Caco-2 (cell line): ENCODE measurements at regions of chr1 and their contacts with region 1.

Region 1: DNA sequence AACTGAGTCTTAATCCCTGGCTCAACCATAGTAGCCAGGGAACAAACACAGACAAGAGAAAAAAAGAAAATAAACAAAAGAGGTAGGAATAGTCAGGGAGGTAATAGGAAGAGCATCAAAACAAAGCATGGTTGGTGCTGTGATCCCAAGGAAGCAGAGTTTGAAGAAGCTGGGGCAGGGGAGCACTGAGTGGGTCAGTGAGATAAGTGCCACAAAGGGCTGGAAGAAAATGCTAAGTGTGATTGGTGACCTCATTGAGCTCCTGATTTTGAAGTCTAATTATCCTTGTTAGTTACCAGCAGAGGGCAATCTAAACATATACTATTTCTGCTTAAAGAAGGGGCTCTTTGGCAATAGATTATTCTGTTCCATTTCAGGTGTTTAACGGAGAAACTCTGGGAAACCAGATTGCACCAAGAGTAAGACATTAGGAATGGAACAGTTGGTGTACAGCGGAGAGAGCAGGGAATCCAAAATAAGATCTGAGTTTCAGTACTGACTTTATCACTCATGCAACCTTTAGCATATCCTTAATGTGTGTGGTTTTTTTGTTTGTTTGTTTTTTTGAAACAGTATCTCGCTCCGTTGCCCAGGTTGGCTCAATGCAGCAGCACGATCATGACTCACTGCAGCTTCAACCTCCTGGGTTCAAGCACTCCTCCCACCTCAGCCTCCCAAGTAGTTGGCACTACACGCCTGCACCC is 30.7 kb upstream of the KIAA1614 start:
- DNase-seq: no peak
- H3K4me3 ChIP-seq: no peak overlapping the region
- H3K4me3 Mint-ChIP-seq: no peak overlapping the region
- H3K27ac Mint-ChIP-seq: no peak overlapping the region
- H3K4me1 ChIP-seq: peaks cover 8% of the 10 kb centered on the region; the same call in 1 of the 2 replicates
- H3K4me1 Mint-ChIP-seq: peaks cover 14% of the 10 kb centered on the region
- H3K27me3 ChIP-seq: no peaks in the 10 kb centered on the region
- H3K27me3 Mint-ChIP-seq: no peaks in the 10 kb centered on the region
- CTCF ChIP-seq: peak; percentile 38 to 47

Region 2: DNA sequence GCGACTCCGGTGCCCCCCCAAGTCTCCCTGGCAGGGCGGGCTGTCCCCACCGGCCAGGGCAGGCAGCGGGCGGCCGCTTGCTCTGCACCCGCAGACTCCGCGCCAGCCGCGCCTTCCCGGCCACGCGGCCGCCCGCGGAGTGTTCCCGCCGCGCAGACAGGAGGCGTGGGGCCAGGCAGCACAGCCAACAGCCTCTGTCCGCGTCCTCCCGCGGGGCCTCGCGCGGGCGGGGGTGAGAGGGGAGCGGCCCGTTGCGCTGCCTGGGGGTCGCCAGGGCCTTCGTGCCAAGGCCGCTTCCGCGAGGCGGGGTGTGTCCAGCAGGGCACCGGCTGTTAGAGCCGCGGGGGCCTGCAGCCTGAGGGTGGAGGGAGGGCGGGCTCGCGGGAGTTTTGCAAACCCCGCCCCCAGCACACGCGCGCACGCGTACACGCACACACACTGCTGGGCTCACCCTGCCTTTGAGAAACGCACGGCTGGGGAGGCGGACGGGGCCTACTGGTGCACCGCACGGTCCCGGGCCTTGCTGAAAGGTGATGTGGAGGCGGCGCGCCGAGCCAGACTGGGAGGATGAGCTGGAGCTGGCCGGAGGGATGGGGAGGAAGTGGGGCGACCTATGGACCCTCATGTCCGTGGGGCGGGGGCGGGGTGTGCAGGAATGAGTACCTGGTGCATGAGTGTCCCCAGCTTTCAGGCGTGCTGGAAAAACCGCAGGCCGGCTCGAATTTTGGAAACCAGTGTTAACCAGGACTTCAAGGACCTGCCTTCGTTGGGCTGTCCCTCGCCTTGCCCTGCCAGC is 72.2 kb after region 1 on chr1:
- CTCF ChIA-PET with region 1: interaction called, 5 read pairs
- POLR2A ChIA-PET with region 1: no interaction called
- intact Hi-C with region 1: loop called (anchors 10 kb)
- DNase-seq: peak; percentile 70 to 71
- H3K4me3 ChIP-seq: peak overlapping the region; percentile 78
- H3K4me3 Mint-ChIP-seq: peak overlapping the region; percentile 73
- H3K27ac Mint-ChIP-seq: no peak overlapping the region
- H3K4me1 ChIP-seq: peaks cover 10% of the 10 kb centered on the region
- H3K4me1 Mint-ChIP-seq: no peaks in the 10 kb centered on the region
- H3K27me3 ChIP-seq: no peaks in the 10 kb centered on the region
- H3K27me3 Mint-ChIP-seq: no peaks in the 10 kb centered on the region
- CTCF ChIP-seq: no peak

Region 3: GRCh38 chr1:181038399-181038873 is 156.5 kb after region 1 on chr1:
- CTCF ChIA-PET with region 1: interaction called, 4 read pairs
- POLR2A ChIA-PET with region 1: no interaction called
- intact Hi-C with region 1: loop called (anchors 1 kb)
- DNase-seq: peak; percentile 79 to 85
- H3K4me3 ChIP-seq: no peak overlapping the region
- H3K4me3 Mint-ChIP-seq: no peak overlapping the region
- H3K27ac Mint-ChIP-seq: no peak overlapping the region
- H3K4me1 ChIP-seq: peaks cover 9% of the 10 kb centered on the region
- H3K4me1 Mint-ChIP-seq: peaks cover 13% of the 10 kb centered on the region
- H3K27me3 ChIP-seq: no peaks in the 10 kb centered on the region
- H3K27me3 Mint-ChIP-seq: no peaks in the 10 kb centered on the region
- CTCF ChIP-seq: peak; percentile 67 to 79

Region 4: GRCh38 chr1:181100015-181100905 is 218.3 kb after region 1 on chr1:
- CTCF ChIA-PET with region 1: interaction called, 10 read pairs
- POLR2A ChIA-PET with region 1: no interaction called
- intact Hi-C with region 1: no loop called
- DNase-seq: peak; percentile 36 to 55
- H3K4me3 ChIP-seq: no peak overlapping the region
- H3K4me3 Mint-ChIP-seq: peak overlapping the region; percentile 46
- H3K27ac Mint-ChIP-seq: peak overlapping the region; percentile 7
- H3K4me1 ChIP-seq: peaks cover 45% of the 10 kb centered on the region
- H3K4me1 Mint-ChIP-seq: peaks cover 38% of the 10 kb centered on the region
- H3K27me3 ChIP-seq: no peaks in the 10 kb centered on the region
- H3K27me3 Mint-ChIP-seq: no peaks in the 10 kb centered on the region
- CTCF ChIP-seq: no peak

Region 5: GRCh38 chr1:181166377-181167196 is 284.6 kb after region 1 on chr1:
- CTCF ChIA-PET with region 1: interaction called, 7 read pairs
- POLR2A ChIA-PET with region 1: no interaction called
- intact Hi-C with region 1: loop called (anchors 1 kb)
- DNase-seq: peak; percentile 70 to 74
- H3K4me3 ChIP-seq: no peak overlapping the region
- H3K4me3 Mint-ChIP-seq: peak overlapping the region; percentile 52
- H3K27ac Mint-ChIP-seq: no peak overlapping the region
- H3K4me1 ChIP-seq: no peaks in the 10 kb centered on the region
- H3K4me1 Mint-ChIP-seq: no peaks in the 10 kb centered on the region
- H3K27me3 ChIP-seq: no peaks in the 10 kb centered on the region
- H3K27me3 Mint-ChIP-seq: no peaks in the 10 kb centered on the region
- CTCF ChIP-seq: peak; percentile 70 to 81